Activated naive CD4-positive, alpha-beta T cell treated with anti-CD3 and anti-CD28 coated beads for 36 hours (primary cell): ENCODE measurements at regions of chr3 and their contacts with region 1.

Region 1: GRCh38 chr3:194134757-194135528 is 1.0 kb upstream of the HES1 start:
- DNase-seq: peak; percentile 89
- H3K4me3 Mint-ChIP-seq: peak overlapping the region; percentile 84
- H3K27ac Mint-ChIP-seq: peak overlapping the region; percentile 90
- H3K4me1 Mint-ChIP-seq: peaks cover 41% of the 10 kb centered on the region
- H3K27me3 Mint-ChIP-seq: peaks cover 54% of the 10 kb centered on the region

Region 2: DNA sequence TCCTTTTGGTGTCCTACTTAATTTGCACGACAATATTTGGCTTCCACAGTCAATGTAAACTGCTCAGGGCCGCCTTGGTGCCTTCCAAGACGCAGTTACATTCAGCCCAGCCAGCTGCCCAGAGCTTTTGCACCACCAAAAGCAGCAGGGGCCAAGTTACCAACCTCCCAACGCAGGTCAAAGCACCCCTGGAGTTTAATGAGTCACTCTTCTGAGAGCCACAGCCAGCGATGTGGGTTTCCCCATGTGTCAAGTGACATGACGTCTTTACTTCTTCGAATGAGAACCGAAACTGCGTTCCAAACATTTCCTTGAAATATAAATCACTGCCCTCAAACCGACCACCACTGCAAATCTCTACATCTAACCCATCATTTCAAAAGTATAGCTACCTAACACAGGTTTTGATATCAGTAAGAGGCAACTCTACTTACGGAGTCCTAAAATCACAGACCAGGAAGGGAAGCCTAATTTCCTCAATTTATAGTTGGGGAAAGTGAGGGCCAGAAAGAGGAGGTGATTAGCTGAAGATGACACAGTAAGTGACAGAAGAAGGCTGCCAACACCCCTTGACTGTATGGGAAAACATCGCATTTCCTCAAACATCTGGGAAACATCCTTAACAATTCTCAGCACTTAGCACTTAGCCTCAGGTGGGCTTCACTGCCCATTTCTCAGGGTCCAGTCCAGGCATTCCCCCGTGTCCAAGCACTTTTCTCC is 1241.8 kb before region 1 on chr3:
- CTCF ChIA-PET with region 1: no interaction called
- intact Hi-C with region 1: loop called (anchors 10 kb)
- DNase-seq: peak; percentile 86
- H3K4me3 Mint-ChIP-seq: peak overlapping the region; percentile 26
- H3K27ac Mint-ChIP-seq: peak overlapping the region; percentile 77
- H3K4me1 Mint-ChIP-seq: peaks cover 83% of the 10 kb centered on the region
- H3K27me3 Mint-ChIP-seq: peaks cover 26% of the 10 kb centered on the region

Region 3: DNA sequence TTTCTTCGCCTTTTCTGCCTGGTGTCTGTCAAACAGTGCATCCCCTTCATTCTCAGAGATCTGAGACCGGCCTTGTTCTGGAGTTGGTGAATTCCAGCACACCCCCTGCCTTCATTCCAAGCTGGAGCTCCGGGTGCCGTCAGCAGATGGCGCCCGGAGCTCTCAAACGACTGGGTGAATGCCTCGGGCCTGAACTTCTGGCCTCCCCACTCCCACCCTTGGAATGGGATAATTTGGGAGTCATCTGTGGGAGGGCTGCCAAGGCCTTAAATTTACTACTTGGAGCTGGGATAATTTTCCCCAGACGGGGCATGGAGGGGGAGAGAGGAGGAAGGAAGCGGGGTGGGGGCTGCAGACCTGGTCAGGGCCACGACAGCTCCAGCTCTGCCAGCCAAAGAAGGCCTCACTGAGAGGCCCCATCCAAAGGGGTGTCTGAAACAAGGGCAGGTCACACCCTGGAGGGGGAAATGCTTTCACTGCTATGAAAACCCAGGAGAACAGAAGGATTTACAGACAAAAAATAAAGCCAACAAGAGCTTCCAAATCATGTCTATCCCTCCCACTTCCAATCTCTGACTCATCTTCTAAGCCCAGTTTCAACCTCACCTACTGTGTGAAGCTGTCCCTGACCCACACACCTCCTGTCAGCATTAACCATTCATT is 354.0 kb before region 1 on chr3:
- CTCF ChIA-PET with region 1: interaction called, 10 read pairs
- intact Hi-C with region 1: loop called (anchors 1 kb)
- DNase-seq: peak; percentile 49
- H3K4me3 Mint-ChIP-seq: no peak overlapping the region
- H3K27ac Mint-ChIP-seq: no peak overlapping the region
- H3K4me1 Mint-ChIP-seq: peaks cover 9% of the 10 kb centered on the region
- H3K27me3 Mint-ChIP-seq: peaks cover 25% of the 10 kb centered on the region

Region 4: DNA sequence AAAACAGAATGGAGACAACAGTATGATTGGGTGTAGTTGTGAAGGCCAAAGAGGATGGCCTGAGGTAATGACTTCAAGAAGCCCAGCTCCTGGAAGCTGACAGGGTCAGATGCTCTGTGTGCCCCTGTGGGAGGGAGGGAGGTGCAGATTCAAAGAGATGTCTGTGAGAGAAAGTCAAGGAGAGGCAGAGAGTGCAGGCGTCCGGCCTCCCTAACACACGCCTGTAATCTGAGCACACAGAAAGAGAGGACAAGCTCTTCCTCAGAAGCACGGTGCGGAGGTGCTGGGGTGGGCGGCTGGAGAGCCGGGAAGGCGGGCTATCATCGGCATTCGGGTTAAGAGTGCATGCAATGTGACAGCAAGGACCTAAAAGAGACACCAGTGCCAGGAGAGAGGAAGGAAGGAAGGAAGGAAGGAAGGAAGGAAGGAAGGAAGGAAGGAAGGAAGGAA is 237.2 kb before region 1 on chr3:
- CTCF ChIA-PET with region 1: no interaction called
- intact Hi-C with region 1: no loop called
- DNase-seq: no peak
- H3K4me3 Mint-ChIP-seq: no peak overlapping the region
- H3K27ac Mint-ChIP-seq: no peak overlapping the region
- H3K4me1 Mint-ChIP-seq: no peaks in the 10 kb centered on the region
- H3K27me3 Mint-ChIP-seq: peaks cover 2% of the 10 kb centered on the region

Region 5: DNA sequence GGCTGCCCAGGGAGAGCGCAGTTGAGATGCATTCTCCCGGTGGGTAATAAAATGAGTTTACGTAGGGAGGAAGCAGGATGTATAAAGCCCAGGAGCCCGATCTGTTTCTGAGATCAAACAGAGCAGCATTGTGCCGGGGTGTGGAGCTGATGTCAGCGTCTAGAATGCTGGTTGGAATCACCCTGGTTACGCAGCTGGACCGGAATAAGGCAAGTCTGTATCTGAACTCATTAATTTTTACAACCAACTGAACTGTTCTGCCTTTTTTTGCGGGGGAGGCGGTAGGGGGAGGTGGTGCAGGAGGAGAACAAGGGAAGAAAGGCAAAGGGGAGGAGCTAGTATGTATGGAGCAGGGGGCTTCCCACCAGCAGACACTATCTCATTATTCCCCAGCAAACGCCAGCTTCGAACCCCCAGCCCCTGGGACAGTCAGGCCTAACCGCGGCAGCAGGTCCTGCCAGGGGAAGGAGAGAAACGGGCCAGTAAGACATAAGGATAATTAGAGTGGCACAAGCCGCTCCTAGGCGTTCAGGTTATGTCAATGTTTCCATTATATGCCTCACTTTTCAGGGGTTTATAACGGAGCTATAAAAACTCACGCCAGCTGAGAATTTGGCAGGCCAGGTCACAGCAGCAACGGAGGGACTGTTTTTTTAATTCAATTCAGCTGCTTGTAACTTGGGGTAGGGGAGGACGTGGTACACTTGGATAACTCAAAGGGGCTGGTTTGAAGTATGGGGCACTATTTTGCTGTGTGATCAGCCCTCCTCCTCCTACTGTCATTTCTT is 174.3 kb before region 1 on chr3:
- CTCF ChIA-PET with region 1: no interaction called
- intact Hi-C with region 1: no loop called
- DNase-seq: no peak
- H3K4me3 Mint-ChIP-seq: no peak overlapping the region
- H3K27ac Mint-ChIP-seq: no peak overlapping the region
- H3K4me1 Mint-ChIP-seq: peaks cover 19% of the 10 kb centered on the region
- H3K27me3 Mint-ChIP-seq: peaks cover 39% of the 10 kb centered on the region

Region 6: DNA sequence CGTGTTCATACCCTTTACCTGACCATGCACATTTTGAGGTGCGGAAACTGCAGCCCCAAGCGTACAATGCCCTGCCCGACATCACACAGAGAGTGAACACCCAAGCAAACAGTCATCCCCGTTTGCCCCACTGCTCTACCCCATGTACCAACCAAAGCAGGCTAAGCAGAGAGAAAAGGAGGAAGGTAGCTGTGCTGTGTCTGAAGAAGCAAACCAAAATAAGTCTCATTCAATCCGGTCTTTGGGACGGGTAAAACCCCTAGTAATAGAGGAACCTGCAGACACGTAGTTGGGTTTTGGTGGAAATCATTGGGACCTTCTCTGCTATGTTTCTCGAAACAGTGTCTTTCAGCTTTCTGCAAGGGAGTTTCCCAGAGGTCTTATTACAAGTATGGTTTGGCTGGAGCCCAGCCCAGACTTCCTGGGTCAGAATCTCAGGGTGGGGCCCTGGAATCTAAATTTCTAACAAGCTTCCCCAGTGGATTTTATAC is 163.6 kb before region 1 on chr3:
- CTCF ChIA-PET with region 1: interaction called, 4 read pairs
- intact Hi-C with region 1: loop called (anchors 2 kb)
- DNase-seq: peak; percentile 40
- H3K4me3 Mint-ChIP-seq: no peak overlapping the region
- H3K27ac Mint-ChIP-seq: peak overlapping the region; percentile 2
- H3K4me1 Mint-ChIP-seq: peaks cover 18% of the 10 kb centered on the region
- H3K27me3 Mint-ChIP-seq: peaks cover 18% of the 10 kb centered on the region

Region 7: DNA sequence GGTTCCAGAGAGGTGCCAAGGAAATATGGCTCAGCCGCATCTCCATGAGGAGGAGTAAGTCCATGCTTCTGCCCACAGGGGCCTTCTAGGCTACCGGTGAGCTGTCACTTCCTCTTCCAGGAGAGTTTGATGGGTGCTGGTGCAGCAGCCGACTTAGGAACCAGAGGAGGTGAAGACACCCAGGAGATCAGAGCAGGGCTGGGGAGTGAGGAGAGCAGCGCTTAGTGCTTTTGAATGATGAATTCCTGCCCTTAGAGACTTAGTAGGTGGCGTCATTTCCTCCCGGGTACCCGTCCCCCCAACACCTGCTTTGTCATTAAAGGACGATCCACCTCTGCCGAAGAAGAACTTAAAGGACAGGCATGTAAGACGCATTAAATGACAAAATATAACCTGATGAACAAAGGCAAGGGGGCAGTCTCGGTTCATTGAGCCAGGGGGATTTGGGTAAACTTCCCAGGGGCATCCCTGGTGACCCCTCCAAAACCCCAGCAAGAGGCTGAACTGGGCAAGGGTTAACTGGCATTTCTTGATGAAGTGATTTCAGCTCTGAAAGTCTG is 68.6 kb after region 1 on chr3:
- CTCF ChIA-PET with region 1: interaction called, 4 read pairs
- intact Hi-C with region 1: loop called (anchors 1 kb)
- DNase-seq: peak; percentile 62
- H3K4me3 Mint-ChIP-seq: peak overlapping the region; percentile 71
- H3K27ac Mint-ChIP-seq: peak overlapping the region; percentile 57
- H3K4me1 Mint-ChIP-seq: peaks cover 18% of the 10 kb centered on the region
- H3K27me3 Mint-ChIP-seq: peaks cover 14% of the 10 kb centered on the region

Region 8: DNA sequence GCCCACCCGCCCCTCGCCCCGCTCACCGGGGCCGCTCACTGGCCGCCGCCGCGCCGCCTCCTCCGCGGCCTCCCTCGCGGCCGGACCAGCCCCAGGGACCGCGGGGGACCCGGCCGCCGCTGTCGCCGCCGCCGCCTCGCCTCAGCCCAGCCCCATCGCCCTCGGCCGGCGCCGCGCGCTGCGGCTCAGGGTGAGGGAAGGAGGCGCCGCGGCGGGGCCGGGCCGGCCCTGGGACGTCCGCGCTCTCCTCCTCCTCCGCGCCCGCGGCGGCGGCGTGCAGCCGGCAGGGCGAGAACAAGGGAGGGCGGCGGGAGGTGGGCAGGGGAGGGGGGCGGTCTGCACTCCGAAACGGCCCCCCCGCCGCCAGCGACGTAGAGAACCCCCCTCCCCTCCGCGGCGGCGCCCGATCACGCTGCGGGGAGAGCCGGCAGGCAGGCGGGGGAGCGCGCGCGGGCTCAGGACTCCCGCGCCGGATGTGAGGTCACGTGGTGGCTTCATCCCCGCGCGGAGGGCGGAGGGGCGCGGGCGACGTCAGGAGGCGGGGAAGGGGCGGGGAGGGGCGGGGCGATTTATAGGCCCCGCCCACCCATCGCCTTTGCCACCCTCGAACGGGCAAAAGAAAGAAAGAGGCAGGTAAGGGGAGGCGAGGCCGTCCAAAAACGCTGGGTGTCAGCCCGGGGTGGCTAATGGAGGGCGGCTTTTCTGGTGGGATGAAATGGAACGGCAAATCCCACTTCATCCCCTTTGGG is 351.8 kb after region 1 on chr3 and contains the start of gene ATP13A3:
- CTCF ChIA-PET with region 1: no interaction called
- intact Hi-C with region 1: loop called (anchors 1 kb)
- DNase-seq: peak; percentile 86
- H3K4me3 Mint-ChIP-seq: peak within 1 kb of the TSS; percentile 91
- H3K27ac Mint-ChIP-seq: peak within 1 kb of the TSS; percentile 94
- H3K4me1 Mint-ChIP-seq: peaks cover 59% of the 10 kb centered on the region
- H3K27me3 Mint-ChIP-seq: no peaks in the 10 kb centered on the region
- total RNA-seq, gene ATP13A3: 88.4 to 92.3 TPM